CD4-positive, alpha-beta T cell (primary cell): ENCODE measurements at regions of chrX and their contacts with region 1.

Region 1: GRCh38 chrX:70454441-70455365 is 10.1 kb downstream of the DLG3 start:
- DNase-seq: peak in 13 of 14 experiments; percentile 38 to 89 (median 62)
- ATAC-seq: peak; percentile 74
- H3K4me3 ChIP-seq: peak overlapping the region; percentile 67
- H3K4me3 Mint-ChIP-seq: peak overlapping the region; percentile 87
- H3K27ac ChIP-seq: peak overlapping the region; percentile 17 to 61
- H3K27ac Mint-ChIP-seq: peak overlapping the region; percentile 86
- H3K4me1 ChIP-seq: peaks cover 40% of the 10 kb centered on the region
- H3K4me1 Mint-ChIP-seq: peaks cover 41% of the 10 kb centered on the region
- H3K27me3 ChIP-seq: no peaks in the 10 kb centered on the region
- H3K27me3 Mint-ChIP-seq: no peaks in the 10 kb centered on the region
- CTCF ChIP-seq: peak; percentile 69

Region 2: DNA sequence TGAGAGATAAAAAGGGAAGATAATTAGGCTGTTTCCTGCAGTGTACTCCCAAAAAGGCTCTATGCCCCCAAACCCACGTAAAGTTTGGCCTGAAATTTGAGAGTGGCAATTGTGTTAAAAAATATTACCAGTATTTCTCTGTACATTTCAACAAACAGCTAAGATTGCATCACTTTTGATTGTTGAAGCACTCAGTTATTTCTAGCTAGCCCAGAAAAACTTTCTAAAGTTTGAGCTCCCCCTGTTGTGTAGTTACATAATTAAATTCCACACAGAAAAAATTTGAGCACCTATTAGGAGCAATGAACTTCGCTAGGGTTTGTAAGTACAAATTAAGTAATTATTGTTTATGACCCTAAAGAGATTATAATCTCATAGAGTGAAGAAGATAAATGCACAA is 99.4 kb after region 1 on chrX:
- CTCF ChIA-PET with region 1: no interaction called
- POLR2A ChIA-PET with region 1: no interaction called
- intact Hi-C with region 1: loop called in 1 of 2 experiments (anchors 5 kb)
- DNase-seq: peak in 1 of 14 experiments; percentile 8
- ATAC-seq: no peak
- H3K4me3 ChIP-seq: no peak overlapping the region
- H3K4me3 Mint-ChIP-seq: no peak overlapping the region
- H3K27ac ChIP-seq: no peak overlapping the region
- H3K27ac Mint-ChIP-seq: no peak overlapping the region
- H3K4me1 ChIP-seq: no peaks in the 10 kb centered on the region
- H3K4me1 Mint-ChIP-seq: no peaks in the 10 kb centered on the region
- H3K27me3 ChIP-seq: no peaks in the 10 kb centered on the region
- H3K27me3 Mint-ChIP-seq: no peaks in the 10 kb centered on the region
- CTCF ChIP-seq: no peak

Region 3: DNA sequence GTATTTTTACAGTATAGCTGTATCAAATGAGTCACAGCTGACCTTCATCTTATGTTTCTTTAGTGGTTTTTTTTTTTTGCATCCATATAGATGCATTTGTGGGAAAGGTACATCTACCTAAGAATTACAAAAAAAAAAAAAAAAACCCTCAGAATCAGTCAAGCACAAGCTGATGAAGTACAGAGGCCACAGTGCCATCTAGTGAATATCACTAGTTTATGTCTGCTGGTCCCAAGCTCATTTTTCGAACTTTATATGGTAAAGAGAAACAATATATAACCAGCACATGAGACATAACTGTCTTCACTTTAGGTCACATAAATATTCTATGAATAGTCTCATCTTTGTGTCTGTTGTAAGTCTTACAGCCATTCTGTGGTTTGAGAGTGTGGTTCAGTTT is 210.0 kb after region 1 on chrX:
- CTCF ChIA-PET with region 1: interaction called, 4 read pairs
- POLR2A ChIA-PET with region 1: no interaction called
- intact Hi-C with region 1: loop called (anchors 2 to 5 kb)
- DNase-seq: peak in 3 of 14 experiments; percentile 32 to 41 (median 39)
- ATAC-seq: no peak
- H3K4me3 ChIP-seq: no peak overlapping the region
- H3K4me3 Mint-ChIP-seq: no peak overlapping the region
- H3K27ac ChIP-seq: no peak overlapping the region
- H3K27ac Mint-ChIP-seq: no peak overlapping the region
- H3K4me1 ChIP-seq: no peaks in the 10 kb centered on the region
- H3K4me1 Mint-ChIP-seq: no peaks in the 10 kb centered on the region
- H3K27me3 ChIP-seq: no peaks in the 10 kb centered on the region
- H3K27me3 Mint-ChIP-seq: no peaks in the 10 kb centered on the region
- CTCF ChIP-seq: no peak

Region 4: DNA sequence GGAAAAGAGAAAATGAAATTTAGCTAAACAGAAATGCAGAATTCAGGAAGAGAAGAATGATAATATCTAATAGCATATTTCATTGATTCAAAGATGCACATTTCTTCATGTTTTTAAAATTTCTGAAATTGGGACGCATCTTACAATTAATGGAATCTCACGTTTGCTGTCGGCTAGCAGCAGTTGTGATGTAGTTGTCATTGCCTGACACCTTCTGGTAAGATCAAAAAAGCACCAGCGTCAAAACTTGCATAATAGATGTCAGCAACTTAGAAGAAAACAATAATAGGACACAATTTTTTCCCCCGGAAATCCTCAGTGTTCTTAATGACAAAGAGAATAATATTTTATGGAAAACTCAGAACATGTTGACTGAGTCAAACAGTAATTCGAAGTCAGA is 506.0 kb after region 1 on chrX:
- CTCF ChIA-PET with region 1: no interaction called
- POLR2A ChIA-PET with region 1: no interaction called
- intact Hi-C with region 1: loop called in 1 of 2 experiments (anchors 5 kb)
- DNase-seq: peak in 2 of 14 experiments; percentile 1 to 8
- ATAC-seq: no peak
- H3K4me3 ChIP-seq: no peak overlapping the region
- H3K4me3 Mint-ChIP-seq: no peak overlapping the region
- H3K27ac ChIP-seq: no peak overlapping the region
- H3K27ac Mint-ChIP-seq: no peak overlapping the region
- H3K4me1 ChIP-seq: no peaks in the 10 kb centered on the region
- H3K4me1 Mint-ChIP-seq: no peaks in the 10 kb centered on the region
- H3K27me3 ChIP-seq: no peaks in the 10 kb centered on the region
- H3K27me3 Mint-ChIP-seq: peaks cover 17% of the 10 kb centered on the region
- CTCF ChIP-seq: no peak